CD4-positive, alpha-beta T cell (primary cell): ENCODE measurements at regions of chr9 and their contacts with region 1.

Region 1: GRCh38 chr9:124852829-124853531 is at the start of gene WDR38:
- DNase-seq: peak; percentile 56 to 94 (median 67)
- ATAC-seq: peak; percentile 85
- H3K4me3 ChIP-seq: peak within 1 kb of the TSS; percentile 40
- H3K4me3 Mint-ChIP-seq: peak within 1 kb of the TSS; percentile 56
- H3K27ac ChIP-seq: peak within 1 kb of the TSS in 1 of 2 donors; percentile 21
- H3K27ac Mint-ChIP-seq: no peak within 1 kb of the TSS
- H3K4me1 ChIP-seq: peaks cover 19% of the 10 kb centered on the region
- H3K4me1 Mint-ChIP-seq: peaks cover 15% of the 10 kb centered on the region
- H3K27me3 ChIP-seq: peaks cover 0 to 5% of the 10 kb centered on the region in 2 experiments
- H3K27me3 Mint-ChIP-seq: peaks cover 11% of the 10 kb centered on the region
- CTCF ChIP-seq: peak; percentile 99
- total RNA-seq, gene WDR38: not detected

Region 2: DNA sequence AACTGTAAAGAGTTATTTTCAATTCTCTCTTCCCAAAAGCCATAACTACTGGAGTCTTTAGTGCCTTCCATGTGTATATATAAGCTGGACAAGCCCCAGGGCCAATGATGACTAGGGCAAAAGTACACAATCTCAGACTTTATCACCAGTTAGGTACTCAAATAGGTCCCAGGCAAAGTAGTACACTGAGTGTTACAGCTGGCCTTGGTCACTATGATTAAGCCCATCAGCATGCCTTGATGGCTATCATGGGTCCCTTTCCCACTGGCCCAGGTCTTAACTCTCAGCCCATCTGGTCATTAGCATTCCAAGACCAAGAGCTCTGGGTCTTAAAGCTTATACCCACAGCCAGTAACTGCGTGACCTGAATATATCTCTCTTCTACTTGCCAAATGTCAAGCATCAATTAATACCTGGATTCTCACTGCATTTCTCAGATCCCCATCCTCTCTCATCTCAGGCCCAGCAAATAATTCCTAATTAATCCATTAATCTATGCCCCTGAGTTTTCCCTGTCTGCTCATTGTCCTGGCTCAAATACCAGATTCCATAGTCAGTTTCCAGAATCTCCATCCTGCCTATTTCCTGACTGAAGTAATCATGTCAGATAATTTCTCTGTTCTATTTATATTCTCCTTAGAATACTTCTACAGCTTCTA is 144.2 kb before region 1 on chr9:
- CTCF ChIA-PET with region 1: interaction called, 6 read pairs
- POLR2A ChIA-PET with region 1: no interaction called
- intact Hi-C with region 1: loop called in 1 of 2 experiments (anchors 2 kb)
- DNase-seq: no peak
- ATAC-seq: no peak
- H3K4me3 ChIP-seq: no peak overlapping the region
- H3K4me3 Mint-ChIP-seq: no peak overlapping the region
- H3K27ac ChIP-seq: no peak overlapping the region
- H3K27ac Mint-ChIP-seq: no peak overlapping the region
- H3K4me1 ChIP-seq: no peaks in the 10 kb centered on the region
- H3K4me1 Mint-ChIP-seq: no peaks in the 10 kb centered on the region
- H3K27me3 ChIP-seq: peaks cover 0 to 9% of the 10 kb centered on the region in 2 experiments
- H3K27me3 Mint-ChIP-seq: peaks cover 27% of the 10 kb centered on the region
- CTCF ChIP-seq: no peak

Region 3: DNA sequence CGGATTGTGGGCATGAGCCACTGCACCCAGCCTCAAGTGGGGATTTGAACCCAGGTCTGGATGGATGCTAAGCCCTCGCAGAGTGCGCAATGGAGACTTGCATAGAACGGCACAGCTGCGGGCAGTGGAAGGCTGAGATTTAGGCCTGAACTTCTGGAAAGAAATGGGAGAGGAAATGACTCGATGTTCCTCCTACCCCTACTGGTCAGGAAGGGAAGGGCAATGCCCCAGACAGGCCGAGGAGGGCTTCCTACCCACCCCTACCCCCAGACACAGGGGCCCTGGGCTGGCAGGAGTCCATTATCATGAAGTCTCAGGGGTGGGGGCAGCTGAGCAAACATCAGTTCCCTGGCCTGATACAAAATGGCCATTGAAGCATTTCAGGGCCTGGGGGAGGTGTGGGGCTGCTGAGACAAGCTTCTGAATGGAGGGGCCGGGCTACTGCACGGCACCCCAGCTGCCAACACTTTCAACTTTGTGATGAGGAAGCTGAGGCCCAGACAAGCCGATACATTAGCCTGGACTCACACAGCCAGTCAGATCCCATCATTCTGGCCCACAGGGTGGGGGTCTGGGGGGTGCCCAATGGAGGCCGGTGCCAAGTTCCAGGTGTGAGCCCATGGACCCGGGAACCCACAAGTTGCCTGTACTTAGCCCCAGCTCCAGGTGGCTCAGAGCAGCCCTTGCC is 13.2 kb before region 1 on chr9:
- CTCF ChIA-PET with region 1: interaction called, 16 read pairs
- POLR2A ChIA-PET with region 1: no interaction called
- intact Hi-C with region 1: no loop called
- DNase-seq: peak in 1 of 14 experiments; percentile 20
- ATAC-seq: no peak
- H3K4me3 ChIP-seq: no peak overlapping the region
- H3K4me3 Mint-ChIP-seq: no peak overlapping the region
- H3K27ac ChIP-seq: no peak overlapping the region
- H3K27ac Mint-ChIP-seq: no peak overlapping the region
- H3K4me1 ChIP-seq: no peaks in the 10 kb centered on the region
- H3K4me1 Mint-ChIP-seq: no peaks in the 10 kb centered on the region
- H3K27me3 ChIP-seq: peaks cover 3 to 19% of the 10 kb centered on the region in 2 experiments
- H3K27me3 Mint-ChIP-seq: peaks cover 41% of the 10 kb centered on the region
- CTCF ChIP-seq: no peak

Region 4: GRCh38 chr9:124894741-124895170 is 41.8 kb after region 1 on chr9:
- CTCF ChIA-PET with region 1: interaction called, 10 read pairs
- POLR2A ChIA-PET with region 1: no interaction called
- intact Hi-C with region 1: no loop called
- DNase-seq: peak in 11 of 14 experiments; percentile 10 to 77 (median 37)
- ATAC-seq: peak; percentile 96
- H3K4me3 ChIP-seq: no peak overlapping the region
- H3K4me3 Mint-ChIP-seq: no peak overlapping the region
- H3K27ac ChIP-seq: no peak overlapping the region
- H3K27ac Mint-ChIP-seq: no peak overlapping the region
- H3K4me1 ChIP-seq: peaks cover 8% of the 10 kb centered on the region
- H3K4me1 Mint-ChIP-seq: peaks cover 14% of the 10 kb centered on the region
- H3K27me3 ChIP-seq: no peaks in the 10 kb centered on the region
- H3K27me3 Mint-ChIP-seq: peaks cover 7% of the 10 kb centered on the region
- CTCF ChIP-seq: peak; percentile 31

Region 5: DNA sequence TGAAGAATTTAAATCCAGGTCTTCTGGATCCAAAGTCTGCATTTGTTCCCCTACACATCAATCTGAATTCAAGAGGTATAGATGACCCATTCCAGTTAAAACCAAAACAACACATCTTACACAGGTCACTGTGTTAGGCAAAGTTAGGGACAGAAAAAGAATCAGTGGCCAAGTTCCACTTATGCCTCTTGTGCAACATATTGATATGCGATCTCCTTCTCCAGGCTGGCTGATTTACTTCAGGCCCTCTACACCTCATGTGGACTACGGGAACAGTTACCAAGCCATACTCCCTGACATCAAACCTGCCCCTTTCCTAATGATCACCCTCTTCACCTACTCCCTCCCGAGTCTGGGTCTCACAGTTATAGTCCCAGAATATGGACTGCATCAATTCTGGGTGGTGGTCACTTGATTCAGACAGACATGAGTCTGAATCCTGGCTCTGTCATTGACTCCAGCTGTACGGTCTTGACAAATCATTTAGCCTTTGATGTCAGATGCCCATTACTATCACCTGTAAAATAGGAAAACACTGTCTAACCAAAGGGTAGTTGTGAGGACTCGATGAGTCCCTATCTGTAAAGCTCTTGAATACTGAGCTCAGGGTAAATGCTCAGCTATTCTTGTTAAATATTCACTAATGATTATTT is 61.9 kb after region 1 on chr9:
- CTCF ChIA-PET with region 1: no interaction called
- POLR2A ChIA-PET with region 1: no interaction called
- intact Hi-C with region 1: no loop called
- DNase-seq: no peak
- ATAC-seq: no peak
- H3K4me3 ChIP-seq: no peak overlapping the region
- H3K4me3 Mint-ChIP-seq: no peak overlapping the region
- H3K27ac ChIP-seq: no peak overlapping the region
- H3K27ac Mint-ChIP-seq: no peak overlapping the region
- H3K4me1 ChIP-seq: no peaks in the 10 kb centered on the region
- H3K4me1 Mint-ChIP-seq: no peaks in the 10 kb centered on the region
- H3K27me3 ChIP-seq: no peaks in the 10 kb centered on the region
- H3K27me3 Mint-ChIP-seq: no peaks in the 10 kb centered on the region
- CTCF ChIP-seq: no peak

Region 6: GRCh38 chr9:125374443-125375309 is 521.7 kb after region 1 on chr9:
- CTCF ChIA-PET with region 1: no interaction called
- POLR2A ChIA-PET with region 1: no interaction called
- intact Hi-C with region 1: loop called in 1 of 2 experiments (anchors 5 kb)
- DNase-seq: peak; percentile 38 to 82 (median 56)
- ATAC-seq: peak; percentile 98
- H3K4me3 ChIP-seq: no peak overlapping the region
- H3K4me3 Mint-ChIP-seq: peak overlapping the region; percentile 40
- H3K27ac ChIP-seq: no peak overlapping the region
- H3K27ac Mint-ChIP-seq: no peak overlapping the region
- H3K4me1 ChIP-seq: peaks cover 10% of the 10 kb centered on the region
- H3K4me1 Mint-ChIP-seq: peaks cover 6% of the 10 kb centered on the region
- H3K27me3 ChIP-seq: peaks cover 0 to 5% of the 10 kb centered on the region in 2 experiments
- H3K27me3 Mint-ChIP-seq: peaks cover 21% of the 10 kb centered on the region
- CTCF ChIP-seq: peak; percentile 74